Activated naive CD4-positive, alpha-beta T cell treated with anti-CD3 and anti-CD28 coated beads for 36 hours (primary cell): ENCODE measurements at regions of chr10 and their contacts with region 1.

Region 1: GRCh38 chr10:103678178-103678526 is 177.2 kb downstream of the SH3PXD2A start:
- DNase-seq: peak; percentile 95
- H3K4me3 Mint-ChIP-seq: peak overlapping the region; percentile 79
- H3K27ac Mint-ChIP-seq: peak overlapping the region; percentile 87
- H3K4me1 Mint-ChIP-seq: peaks cover 16% of the 10 kb centered on the region
- H3K27me3 Mint-ChIP-seq: no peaks in the 10 kb centered on the region

Region 2: GRCh38 chr10:103491493-103492381 is 186.4 kb before region 1 on chr10:
- CTCF ChIA-PET with region 1: no interaction called
- intact Hi-C with region 1: no loop called
- DNase-seq: no peak
- H3K4me3 Mint-ChIP-seq: no peak overlapping the region
- H3K27ac Mint-ChIP-seq: no peak overlapping the region
- H3K4me1 Mint-ChIP-seq: peaks cover 16% of the 10 kb centered on the region
- H3K27me3 Mint-ChIP-seq: peaks cover 35% of the 10 kb centered on the region

Region 3: GRCh38 chr10:103542764-103543616 is 135.2 kb before region 1 on chr10:
- CTCF ChIA-PET with region 1: no interaction called
- intact Hi-C with region 1: no loop called
- DNase-seq: peak; percentile 77
- H3K4me3 Mint-ChIP-seq: peak overlapping the region; percentile 42
- H3K27ac Mint-ChIP-seq: peak overlapping the region; percentile 9
- H3K4me1 Mint-ChIP-seq: peaks cover 13% of the 10 kb centered on the region
- H3K27me3 Mint-ChIP-seq: peaks cover 2% of the 10 kb centered on the region

Region 4: DNA sequence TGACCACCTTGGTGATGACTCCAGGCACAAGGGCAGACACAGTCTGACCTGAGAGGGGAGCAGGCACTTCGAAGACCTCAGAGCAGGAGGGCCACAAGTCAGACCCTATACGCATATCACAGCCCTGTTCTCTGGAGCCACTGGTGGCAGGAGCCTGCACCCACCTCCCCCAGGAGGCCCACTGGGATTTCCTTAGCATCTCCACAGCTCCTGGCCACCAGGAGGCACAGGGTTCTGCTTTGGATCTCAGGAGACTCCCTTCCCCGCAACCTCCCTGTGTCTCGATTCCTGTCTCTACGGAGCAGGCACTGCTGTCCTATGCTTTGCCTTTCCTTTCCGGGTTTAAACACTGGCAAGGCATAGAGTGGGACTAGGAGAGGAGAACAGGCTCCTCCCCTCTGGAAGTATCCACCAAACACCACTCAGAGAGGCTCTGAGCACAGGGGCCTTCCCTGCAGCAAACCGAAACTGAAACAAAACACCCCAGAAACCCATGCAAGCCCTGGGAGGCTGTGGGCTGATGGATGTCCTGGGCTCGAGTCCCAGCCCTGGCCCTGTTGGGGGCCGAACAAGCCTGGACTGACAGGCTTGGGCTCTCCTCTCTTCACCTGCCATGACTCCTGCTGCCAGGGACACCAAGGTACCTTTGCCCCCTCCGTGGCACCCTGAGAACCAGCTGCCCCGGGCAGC is 18.3 kb before region 1 on chr10:
- CTCF ChIA-PET with region 1: interaction called, 3 read pairs
- intact Hi-C with region 1: loop called (anchors 1 kb)
- DNase-seq: peak; percentile 78
- H3K4me3 Mint-ChIP-seq: peak overlapping the region; percentile 84
- H3K27ac Mint-ChIP-seq: peak overlapping the region; percentile 71
- H3K4me1 Mint-ChIP-seq: peaks cover 7% of the 10 kb centered on the region
- H3K27me3 Mint-ChIP-seq: no peaks in the 10 kb centered on the region

Region 5: DNA sequence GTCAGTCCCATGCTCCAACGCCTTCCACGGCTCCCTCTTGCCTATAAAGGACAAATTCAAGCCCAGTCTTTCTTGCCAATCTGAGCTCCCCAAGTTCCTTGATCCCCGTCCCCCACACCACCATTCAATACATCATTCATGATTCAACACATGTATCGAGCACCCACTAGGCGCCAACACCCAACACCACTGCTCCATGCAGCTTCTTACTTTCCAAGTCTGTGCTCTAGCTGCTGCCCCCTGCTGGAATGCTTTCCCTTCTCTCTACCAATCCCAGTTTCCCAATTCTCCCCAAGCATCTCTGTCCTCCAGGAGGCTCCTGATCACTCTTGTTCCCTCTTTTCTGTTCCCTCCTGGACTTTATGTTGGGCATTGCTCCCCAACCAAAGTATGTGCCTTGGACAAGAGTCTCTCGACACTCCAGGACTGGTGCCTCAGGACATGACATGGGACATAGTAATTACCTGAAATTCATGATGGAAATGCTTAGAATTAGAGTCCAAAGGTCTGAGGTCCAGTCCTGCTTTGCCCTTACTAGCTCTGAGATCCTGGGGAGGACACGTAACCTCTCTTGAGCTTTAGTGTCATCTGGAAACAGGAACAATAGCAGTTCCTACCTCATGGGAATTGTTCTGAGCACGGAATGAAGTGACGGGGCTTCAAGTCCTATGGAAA is 11.9 kb before region 1 on chr10:
- CTCF ChIA-PET with region 1: interaction called, 4 read pairs
- intact Hi-C with region 1: loop called (anchors 1 kb)
- DNase-seq: peak; percentile 19
- H3K4me3 Mint-ChIP-seq: no peak overlapping the region
- H3K27ac Mint-ChIP-seq: no peak overlapping the region
- H3K4me1 Mint-ChIP-seq: peaks cover 14% of the 10 kb centered on the region
- H3K27me3 Mint-ChIP-seq: no peaks in the 10 kb centered on the region

Region 6: DNA sequence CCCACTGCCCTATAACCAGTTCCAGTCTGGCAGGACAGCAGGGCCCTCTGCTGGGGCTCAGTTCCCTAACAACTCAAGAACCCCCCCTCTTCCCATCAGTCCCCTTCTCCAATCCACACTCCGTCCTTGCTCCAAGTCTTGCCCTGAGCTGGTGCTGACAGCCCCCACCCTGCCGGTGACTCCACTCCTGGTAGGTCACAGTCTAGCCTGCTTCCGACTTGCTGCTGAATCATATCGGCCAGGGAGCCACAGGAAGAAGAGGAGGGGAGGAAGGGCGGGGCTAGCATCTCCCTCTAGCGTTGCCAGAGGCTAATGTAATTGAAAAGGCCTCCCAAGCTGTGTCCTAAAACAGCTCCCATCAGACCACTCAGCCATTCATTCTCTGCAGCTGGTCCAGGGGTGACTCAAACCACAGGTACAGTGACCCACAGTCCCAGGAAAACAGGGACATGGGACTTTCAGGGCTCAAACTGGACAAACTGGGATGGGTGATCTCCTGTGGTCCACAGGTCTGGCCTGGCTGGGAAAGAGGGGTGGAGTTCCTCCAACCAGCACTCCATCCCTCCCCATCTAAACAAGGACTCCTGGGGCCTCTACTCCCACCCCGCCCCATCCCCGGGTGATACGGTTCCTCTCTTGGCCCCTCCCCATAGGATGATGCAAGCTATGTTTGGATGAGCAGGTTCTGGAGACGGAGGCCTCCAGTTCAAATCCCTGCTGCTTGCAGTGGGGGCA is 18.4 kb after region 1 on chr10:
- CTCF ChIA-PET with region 1: interaction called, 5 read pairs
- intact Hi-C with region 1: loop called (anchors 1 kb)
- DNase-seq: peak; percentile 92
- H3K4me3 Mint-ChIP-seq: peak overlapping the region; percentile 28
- H3K27ac Mint-ChIP-seq: no peak overlapping the region
- H3K4me1 Mint-ChIP-seq: peaks cover 22% of the 10 kb centered on the region
- H3K27me3 Mint-ChIP-seq: no peaks in the 10 kb centered on the region

Region 7: DNA sequence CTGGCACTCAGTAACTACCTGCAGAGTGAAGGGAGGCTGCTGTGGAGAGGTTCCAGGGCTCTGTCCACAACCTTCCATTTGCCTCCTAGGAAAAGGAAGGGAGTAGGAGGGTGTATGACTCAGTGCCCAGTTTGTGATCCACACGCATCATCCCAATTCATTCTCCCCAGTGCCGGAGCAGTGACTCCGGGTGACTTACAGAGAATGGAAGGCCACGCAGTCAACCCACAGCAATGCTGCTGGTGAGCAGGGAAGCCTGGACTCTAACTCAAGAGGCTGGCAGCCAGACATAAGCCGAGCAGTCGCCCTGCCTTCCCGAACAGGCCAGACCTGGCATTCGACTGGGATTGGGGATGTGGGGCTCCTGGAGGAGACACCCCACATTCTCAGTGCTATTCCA is 37.3 kb after region 1 on chr10:
- CTCF ChIA-PET with region 1: no interaction called
- intact Hi-C with region 1: no loop called
- DNase-seq: no peak
- H3K4me3 Mint-ChIP-seq: no peak overlapping the region
- H3K27ac Mint-ChIP-seq: no peak overlapping the region
- H3K4me1 Mint-ChIP-seq: peaks cover 7% of the 10 kb centered on the region
- H3K27me3 Mint-ChIP-seq: no peaks in the 10 kb centered on the region

Region 8: GRCh38 chr10:103918053-103918846 is 240.1 kb after region 1 on chr10 and contains the start of gene STN1:
- CTCF ChIA-PET with region 1: no interaction called
- intact Hi-C with region 1: no loop called
- DNase-seq: peak; percentile 98
- H3K4me3 Mint-ChIP-seq: peak within 1 kb of the TSS; percentile 89
- H3K27ac Mint-ChIP-seq: peak within 1 kb of the TSS; percentile 94
- H3K4me1 Mint-ChIP-seq: peaks cover 29% of the 10 kb centered on the region
- H3K27me3 Mint-ChIP-seq: no peaks in the 10 kb centered on the region
- total RNA-seq, gene STN1: 53.3 to 54.8 TPM